Left cardiac atrium (tissue), 4 donors: ENCODE measurements at regions of chr2 and their contacts with region 1.

Region 1: DNA sequence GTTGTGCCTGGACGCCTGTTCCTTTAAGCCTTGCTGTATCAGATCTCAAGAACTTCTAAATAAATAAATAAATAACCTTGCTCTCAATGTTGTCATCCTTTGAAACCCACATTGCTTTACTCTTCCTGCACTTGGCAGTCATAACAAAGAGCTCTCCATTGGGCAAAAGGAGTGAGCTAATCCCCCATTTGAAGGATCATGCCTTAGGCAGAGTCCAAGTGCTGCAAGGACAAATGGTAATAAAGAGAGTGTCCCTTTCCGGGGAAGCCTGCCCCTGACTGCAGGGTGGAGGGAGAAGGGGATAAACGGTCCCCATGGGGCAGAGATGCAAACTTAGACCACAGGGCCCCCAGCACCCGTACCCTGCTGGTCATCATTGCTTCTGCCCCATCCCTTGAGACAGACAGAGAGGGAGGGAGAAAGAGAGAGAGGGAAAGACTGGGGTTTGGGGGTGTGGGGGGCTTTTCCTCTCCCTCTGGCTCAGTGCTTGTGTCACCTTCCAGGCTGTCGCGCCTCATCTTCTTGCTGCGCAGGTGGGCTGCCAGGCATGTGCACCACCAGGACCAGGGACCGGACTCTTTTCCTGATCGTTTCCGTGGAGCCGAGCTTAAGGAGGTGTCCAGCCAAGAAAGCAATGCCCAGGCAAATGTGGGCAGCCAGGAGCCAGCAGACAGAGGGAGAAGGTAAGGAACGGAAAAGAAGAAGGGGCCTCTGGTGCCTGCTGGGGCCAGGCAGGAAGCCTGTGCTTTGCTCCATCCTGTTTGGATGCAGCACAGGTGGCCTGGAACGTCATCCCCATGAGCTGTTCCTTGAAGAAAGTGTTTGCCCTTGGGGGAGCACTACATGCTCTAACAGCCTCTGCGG is 33.6 kb downstream of the CNGA3 start:
- DNase-seq: no peak
- ATAC-seq: peak in 1 of 2 donors; percentile 10

Region 2: GRCh38 chr2:97697252-97698235 is 682.4 kb before region 1 on chr2:
- intact Hi-C with region 1: loop called in 1 of 2 experiments (anchors 5 kb)
- DNase-seq: peak; percentile 92
- ATAC-seq: peak; percentile 93 to 94

Region 3: GRCh38 chr2:99154643-99155536 is 775.0 kb after region 1 on chr2 and contains the starts of genes LIPT1 and TSGA10:
- intact Hi-C with region 1: no loop called
- DNase-seq: peak; percentile 95
- ATAC-seq: peak; percentile 99
- total RNA-seq, gene LIPT1: 6.0 to 7.1 TPM
- total RNA-seq, gene TSGA10: 3.6 to 4.0 TPM